CD4-positive, alpha-beta memory T cell (primary cell): ENCODE measurements at regions of chr3 and their contacts with region 1.

Region 1: DNA sequence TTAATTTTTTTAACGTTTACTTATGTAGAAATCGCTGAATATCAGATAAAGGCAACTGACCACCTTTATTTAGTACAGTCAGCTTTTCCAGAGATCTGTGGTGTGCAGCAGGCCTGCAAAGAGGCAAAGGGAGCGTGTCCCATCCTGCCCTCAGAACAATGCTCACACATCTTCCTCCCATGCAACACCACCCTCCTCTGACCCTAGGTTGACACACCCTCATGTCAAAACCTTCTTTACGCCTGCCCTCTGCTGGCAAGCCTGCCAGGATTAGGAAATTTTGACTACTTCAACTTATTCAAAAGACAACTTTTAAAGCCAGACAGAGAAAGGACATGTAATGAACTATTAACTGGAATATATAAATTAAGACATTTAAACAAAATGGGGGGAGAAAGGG is 513.7 kb downstream of the FOXP1 start:
- DNase-seq: peak; percentile 65 to 81 (median 68)
- H3K4me3 ChIP-seq: no peak overlapping the region
- H3K4me3 Mint-ChIP-seq: peak overlapping the region in 5 of 8 donors; percentile 6 to 63 (median 16)
- H3K27ac ChIP-seq: no peak overlapping the region
- H3K27ac Mint-ChIP-seq: peak overlapping the region in 6 of 7 donors; percentile 67 to 96 (median 80)
- H3K4me1 ChIP-seq: peaks cover 69% of the 10 kb centered on the region
- H3K4me1 Mint-ChIP-seq: peaks cover 49 to 80% (median 66%) of the 10 kb centered on the region in 4 donors
- H3K27me3 ChIP-seq: no peaks in the 10 kb centered on the region
- H3K27me3 Mint-ChIP-seq: no peaks in the 10 kb centered on the region

Region 2: DNA sequence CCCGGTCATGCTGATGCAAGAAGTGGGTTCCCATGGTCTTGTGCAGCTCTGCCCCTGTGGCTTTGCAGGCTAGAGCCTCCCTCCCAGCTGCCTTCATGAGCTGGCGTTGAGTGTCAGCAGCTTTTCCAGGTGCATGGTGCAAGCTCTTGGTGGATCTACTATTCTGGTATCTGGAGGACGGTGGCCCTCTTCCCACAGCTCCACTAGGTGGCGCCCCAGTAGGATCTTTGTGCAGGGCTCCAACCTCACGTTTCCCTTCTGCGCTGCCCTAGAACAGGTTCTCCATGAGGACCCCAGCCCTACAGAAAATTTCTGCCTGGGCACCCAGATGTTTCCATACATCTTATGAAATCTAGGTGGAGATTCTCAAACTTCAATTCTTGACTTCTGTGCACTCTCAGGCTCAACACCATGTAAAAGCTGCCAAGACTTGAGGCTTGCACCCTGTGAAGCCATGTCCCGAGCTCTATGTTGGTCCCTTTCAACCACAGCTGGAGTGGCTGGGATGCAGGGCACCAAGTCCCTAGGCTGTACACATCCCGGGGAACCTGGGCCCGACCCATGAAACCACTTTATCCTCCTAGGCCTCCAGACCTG is 519.0 kb before region 1 on chr3:
- CTCF ChIA-PET with region 1: interaction called, 3 read pairs
- POLR2A ChIA-PET with region 1: no interaction called
- intact Hi-C with region 1: loop called (anchors 2 kb)
- DNase-seq: peak; percentile 54 to 62 (median 60)
- H3K4me3 ChIP-seq: no peak overlapping the region
- H3K4me3 Mint-ChIP-seq: no peak overlapping the region
- H3K27ac ChIP-seq: no peak overlapping the region
- H3K27ac Mint-ChIP-seq: no peak overlapping the region
- H3K4me1 ChIP-seq: no peaks in the 10 kb centered on the region
- H3K4me1 Mint-ChIP-seq: no peaks in the 10 kb centered on the region
- H3K27me3 ChIP-seq: peaks cover 3% of the 10 kb centered on the region
- H3K27me3 Mint-ChIP-seq: peaks cover 4% of the 10 kb centered on the region in 2 donors

Region 3: DNA sequence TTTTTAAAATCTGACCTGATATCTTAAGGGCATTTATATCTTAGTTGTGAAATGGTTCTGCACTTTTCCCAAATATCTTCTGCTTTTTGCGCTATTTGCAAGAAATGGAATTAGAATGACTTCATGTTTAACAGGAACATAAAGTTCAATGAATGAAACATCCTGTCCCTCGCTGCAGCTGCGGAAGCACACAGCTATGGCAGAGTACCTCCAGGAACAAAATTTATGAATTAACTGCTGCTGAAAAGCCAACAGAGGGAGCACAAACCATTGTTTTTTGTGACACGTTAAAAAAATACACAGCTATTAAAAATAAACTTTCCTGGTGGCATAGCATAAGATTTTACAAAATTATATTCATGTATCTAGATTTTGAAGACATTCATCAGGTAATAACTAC is 353.0 kb before region 1 on chr3:
- CTCF ChIA-PET with region 1: no interaction called
- POLR2A ChIA-PET with region 1: no interaction called
- intact Hi-C with region 1: no loop called
- DNase-seq: peak in 4 of 5 donors; percentile 3 to 7 (median 4)
- H3K4me3 ChIP-seq: no peak overlapping the region
- H3K4me3 Mint-ChIP-seq: no peak overlapping the region
- H3K27ac ChIP-seq: no peak overlapping the region
- H3K27ac Mint-ChIP-seq: no peak overlapping the region
- H3K4me1 ChIP-seq: no peaks in the 10 kb centered on the region
- H3K4me1 Mint-ChIP-seq: peaks cover 0 to 3% (median under 1%) of the 10 kb centered on the region in 4 donors
- H3K27me3 ChIP-seq: peaks cover 4% of the 10 kb centered on the region
- H3K27me3 Mint-ChIP-seq: peaks cover 3 to 14% of the 10 kb centered on the region in 2 donors

Region 4: GRCh38 chr3:71006810-71007785 is 62.7 kb before region 1 on chr3:
- CTCF ChIA-PET with region 1: interaction called, 21 read pairs
- POLR2A ChIA-PET with region 1: interaction called, 28 read pairs
- intact Hi-C with region 1: loop called (anchors 1 kb)
- DNase-seq: peak in 4 of 5 donors; percentile 40 to 45 (median 42)
- H3K4me3 ChIP-seq: no peak overlapping the region
- H3K4me3 Mint-ChIP-seq: peak overlapping the region in 2 of 8 donors; percentile 47 to 66
- H3K27ac ChIP-seq: peak overlapping the region; percentile 68
- H3K27ac Mint-ChIP-seq: peak overlapping the region; percentile 64 to 98 (median 88)
- H3K4me1 ChIP-seq: peaks cover 70% of the 10 kb centered on the region
- H3K4me1 Mint-ChIP-seq: peaks cover 50 to 81% (median 68%) of the 10 kb centered on the region in 4 donors
- H3K27me3 ChIP-seq: no peaks in the 10 kb centered on the region
- H3K27me3 Mint-ChIP-seq: no peaks in the 10 kb centered on the region

Region 5: DNA sequence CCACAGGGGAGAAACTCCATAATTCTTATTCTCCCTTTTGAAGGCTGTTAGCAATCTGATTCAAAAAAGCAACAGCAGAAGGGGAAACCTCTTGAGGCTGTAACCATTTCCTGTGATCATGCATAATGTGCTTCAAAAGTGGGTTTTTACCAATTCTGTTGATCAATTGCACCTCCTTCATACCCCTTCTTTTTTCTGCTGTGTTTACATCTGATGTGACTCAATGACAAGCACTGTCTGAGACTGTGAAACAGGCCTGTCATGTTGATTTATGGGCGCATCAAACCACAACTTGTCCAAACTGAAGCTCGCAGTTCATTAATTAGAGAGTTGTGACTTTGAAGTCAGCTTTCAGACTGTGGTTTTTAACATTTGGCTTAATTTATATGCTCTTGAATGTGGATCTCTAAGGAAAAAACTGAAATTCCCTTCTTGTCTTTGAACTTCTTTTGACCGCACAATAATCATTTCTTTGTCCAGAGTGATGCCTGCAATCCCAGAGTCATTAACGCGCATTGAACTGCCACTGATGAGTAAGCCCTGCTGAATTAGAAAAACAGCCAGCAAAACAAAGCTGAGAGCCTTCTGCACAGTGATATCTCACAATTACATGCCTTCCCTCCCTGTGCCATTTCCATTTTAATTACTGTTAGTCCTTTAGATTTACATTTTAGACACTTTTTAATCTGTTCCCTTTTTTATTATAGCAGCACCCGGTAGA is 19.1 kb before region 1 on chr3:
- CTCF ChIA-PET with region 1: interaction called, 12 read pairs
- POLR2A ChIA-PET with region 1: interaction called, 97 read pairs
- intact Hi-C with region 1: no loop called
- DNase-seq: peak; percentile 64 to 83 (median 74)
- H3K4me3 ChIP-seq: no peak overlapping the region
- H3K4me3 Mint-ChIP-seq: peak overlapping the region in 7 of 8 donors; percentile 26 to 83 (median 66)
- H3K27ac ChIP-seq: peak overlapping the region; percentile 33
- H3K27ac Mint-ChIP-seq: peak overlapping the region; percentile 85 to 97 (median 94)
- H3K4me1 ChIP-seq: peaks cover 100% of the 10 kb centered on the region
- H3K4me1 Mint-ChIP-seq: peaks cover 0 to 99% (median 87%) of the 10 kb centered on the region in 4 donors
- H3K27me3 ChIP-seq: no peaks in the 10 kb centered on the region
- H3K27me3 Mint-ChIP-seq: no peaks in the 10 kb centered on the region

Region 6: DNA sequence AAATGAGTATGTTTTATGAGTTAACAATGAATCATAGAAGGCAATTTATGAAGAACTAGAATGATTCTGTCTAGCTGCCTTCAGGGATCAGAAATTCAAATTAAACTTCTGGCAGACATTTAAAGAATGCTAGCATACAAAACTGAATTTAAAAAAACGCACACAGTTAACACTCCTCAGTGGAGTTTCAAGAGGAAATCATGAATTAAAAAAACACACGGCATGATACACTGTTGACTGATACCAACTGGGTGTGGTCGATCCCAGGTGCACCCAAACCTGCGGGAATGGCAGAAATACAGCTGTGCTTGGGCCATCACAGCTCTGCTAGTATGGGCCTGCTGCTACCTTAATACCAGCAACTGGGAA is 12.3 kb before region 1 on chr3:
- CTCF ChIA-PET with region 1: interaction called, 17 read pairs
- POLR2A ChIA-PET with region 1: interaction called, 97 read pairs
- intact Hi-C with region 1: no loop called
- DNase-seq: no peak
- H3K4me3 ChIP-seq: peak overlapping the region; percentile 21 to 24
- H3K4me3 Mint-ChIP-seq: peak overlapping the region in 7 of 8 donors; percentile 64 to 85 (median 78)
- H3K27ac ChIP-seq: peak overlapping the region; percentile 50
- H3K27ac Mint-ChIP-seq: peak overlapping the region in 6 of 7 donors; percentile 62 to 97 (median 90)
- H3K4me1 ChIP-seq: peaks cover 98% of the 10 kb centered on the region
- H3K4me1 Mint-ChIP-seq: peaks cover 0 to 99% (median 85%) of the 10 kb centered on the region in 4 donors
- H3K27me3 ChIP-seq: no peaks in the 10 kb centered on the region
- H3K27me3 Mint-ChIP-seq: no peaks in the 10 kb centered on the region

Region 7: GRCh38 chr3:71087143-71088018 is 17.6 kb after region 1 on chr3:
- CTCF ChIA-PET with region 1: interaction called, 18 read pairs
- POLR2A ChIA-PET with region 1: interaction called, 41 read pairs
- intact Hi-C with region 1: loop called (anchors 1 kb)
- DNase-seq: peak; percentile 83 to 93 (median 90)
- H3K4me3 ChIP-seq: peak overlapping the region in 1 of 2 donors; percentile 36
- H3K4me3 Mint-ChIP-seq: peak overlapping the region; percentile 65 to 91 (median 77)
- H3K27ac ChIP-seq: peak overlapping the region; percentile 59
- H3K27ac Mint-ChIP-seq: peak overlapping the region; percentile 88 to 98 (median 96)
- H3K4me1 ChIP-seq: peaks cover 89% of the 10 kb centered on the region
- H3K4me1 Mint-ChIP-seq: peaks cover 64 to 87% (median 77%) of the 10 kb centered on the region in 4 donors
- H3K27me3 ChIP-seq: no peaks in the 10 kb centered on the region
- H3K27me3 Mint-ChIP-seq: no peaks in the 10 kb centered on the region